ENCODE measurements at regions of chr3 and their contacts with region 1.

Region 1: GRCh38 chr3:105984837-105985236 is 116.0 kb upstream of the CBLB start:
- DNase-seq: no peak
- ATAC-seq: no peak
- H3K4me3 ChIP-seq: no peak overlapping the region
- H3K27ac ChIP-seq: no peak overlapping the region
- H3K4me1 ChIP-seq: no peaks in the 10 kb centered on the region
- H3K27me3 ChIP-seq: no peaks in the 10 kb centered on the region

Region 2: GRCh38 chr3:106068795-106069194 is 84.0 kb after region 1 on chr3:
- intact Hi-C with region 1: loop called in 1 of 2 experiments (anchors 10 kb)
- DNase-seq: no peak
- ATAC-seq: peak; percentile 80
- H3K4me3 ChIP-seq: no peak overlapping the region
- H3K27ac ChIP-seq: peak overlapping the region in 1 of 2 donors; percentile 63
- H3K4me1 ChIP-seq: no peaks in the 10 kb centered on the region
- H3K27me3 ChIP-seq: no peaks in the 10 kb centered on the region

Measured in aorta (tissue), 5 donors.